Mammary epithelial cell (primary cell): ENCODE measurements at regions of chr19 and their contacts with region 1.

Region 1: DNA sequence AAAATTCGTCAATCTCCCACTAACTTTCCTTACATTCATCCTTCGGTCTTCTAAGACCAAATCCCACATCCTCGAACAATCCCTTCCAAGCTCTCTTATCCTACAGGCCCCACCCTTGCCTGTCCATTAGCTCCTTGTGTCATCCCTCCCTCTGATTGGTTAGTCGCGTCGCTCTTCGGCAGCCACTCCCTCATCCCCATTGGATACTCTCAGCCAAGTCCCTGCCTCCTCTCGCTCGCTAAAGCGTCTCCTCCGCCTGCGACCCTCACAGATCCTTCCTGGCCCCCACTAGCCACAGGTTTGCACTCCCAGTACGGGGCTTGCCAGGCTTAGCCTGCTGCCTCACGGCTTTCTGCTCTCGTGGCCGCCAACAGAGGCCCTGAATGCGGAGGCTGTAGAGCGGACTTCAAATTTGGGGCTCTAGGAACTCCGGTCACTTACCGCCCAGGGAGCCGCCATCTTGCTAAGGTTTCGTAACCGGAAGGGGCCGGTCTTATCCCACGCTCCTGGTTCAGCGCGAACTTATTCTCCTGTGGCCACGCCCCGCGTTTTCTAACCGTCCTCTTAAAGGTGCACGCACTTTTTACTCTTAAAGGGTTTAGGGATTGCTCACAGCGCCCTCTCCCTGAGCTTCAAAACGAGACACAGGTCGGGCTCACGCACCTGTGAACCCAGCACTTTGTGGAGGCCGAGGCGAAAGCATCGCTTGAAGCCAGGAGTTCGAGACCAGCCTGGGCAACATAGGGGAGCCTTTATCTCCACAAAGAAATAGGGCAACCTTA is at the start of gene DMAC2:
- DNase-seq: peak; percentile 97
- H3K4me3 ChIP-seq: peak within 1 kb of the TSS; percentile 68 to 82 (median 76)
- H3K27ac ChIP-seq: peak within 1 kb of the TSS; percentile 79
- H3K4me1 ChIP-seq: peaks cover 9% of the 10 kb centered on the region
- H3K27me3 ChIP-seq: no peaks in the 10 kb centered on the region
- CTCF ChIP-seq: peak; percentile 47 to 57
- total RNA-seq, gene DMAC2: 39.2 to 50.6 TPM

Region 2: GRCh38 chr19:41327576-41328156 is 112.0 kb before region 1 on chr19:
- CTCF ChIA-PET with region 1: no interaction called
- dilution Hi-C with region 1: no loop called
- in situ Hi-C with region 1: no loop called
- intact Hi-C with region 1: loop called (anchors 2 kb)
- DNase-seq: peak; percentile 88
- H3K4me3 ChIP-seq: peak overlapping the region in 1 of 3 experiments; percentile 27
- H3K27ac ChIP-seq: peak overlapping the region; percentile 29
- H3K4me1 ChIP-seq: peaks cover 51% of the 10 kb centered on the region
- H3K27me3 ChIP-seq: no peaks in the 10 kb centered on the region
- CTCF ChIP-seq: no peak